Left lung (tissue), 14 donors: ENCODE measurements at regions of chr14 and their contacts with region 1.

Region 1: GRCh38 chr14:76918751-76919543 is 92.7 kb downstream of the LRRC74A start:
- DNase-seq: peak; percentile 91 to 96 (median 95)
- ATAC-seq: peak; percentile 88
- H3K4me3 ChIP-seq: no peak overlapping the region
- H3K27ac ChIP-seq: peak overlapping the region; percentile 90 to 93
- H3K4me1 ChIP-seq: peaks cover 37 to 75% of the 10 kb centered on the region in 2 donors
- H3K27me3 ChIP-seq: no peaks in the 10 kb centered on the region
- CTCF ChIP-seq: peak in 1 of 2 donors; percentile 13

Region 2: GRCh38 chr14:76956316-76957090 is 37.6 kb after region 1 on chr14:
- intact Hi-C with region 1: loop called in 1 of 2 experiments (anchors 5 kb)
- DNase-seq: peak; percentile 89 to 97 (median 94)
- ATAC-seq: peak; percentile 74
- H3K4me3 ChIP-seq: peak overlapping the region; percentile 15 to 36
- H3K27ac ChIP-seq: peak overlapping the region; percentile 95 to 99
- H3K4me1 ChIP-seq: peaks cover 39 to 87% of the 10 kb centered on the region in 2 donors
- H3K27me3 ChIP-seq: no peaks in the 10 kb centered on the region
- CTCF ChIP-seq: peak in 1 of 2 donors; percentile 51

Region 3: GRCh38 chr14:77040059-77040740 is 121.3 kb after region 1 on chr14:
- intact Hi-C with region 1: loop called in 1 of 2 experiments (anchors 10 kb)
- DNase-seq: peak; percentile 98 to 100 (median 100)
- ATAC-seq: peak; percentile 79
- H3K4me3 ChIP-seq: peak overlapping the region in 1 of 2 donors; percentile 20
- H3K27ac ChIP-seq: peak overlapping the region; percentile 95 to 100
- H3K4me1 ChIP-seq: peaks cover 76 to 98% of the 10 kb centered on the region in 2 donors
- H3K27me3 ChIP-seq: no peaks in the 10 kb centered on the region
- CTCF ChIP-seq: no peak

Region 4: GRCh38 chr14:77053046-77053841 is 134.3 kb after region 1 on chr14:
- intact Hi-C with region 1: loop called (anchors 5 to 10 kb)
- DNase-seq: peak in 3 of 4 donors; percentile 68 to 91 (median 84)
- ATAC-seq: peak; percentile 77
- H3K4me3 ChIP-seq: no peak overlapping the region
- H3K27ac ChIP-seq: peak overlapping the region in 1 of 2 donors; percentile 38
- H3K4me1 ChIP-seq: peaks cover 10 to 44% of the 10 kb centered on the region in 2 donors
- H3K27me3 ChIP-seq: no peaks in the 10 kb centered on the region
- CTCF ChIP-seq: peak; percentile 88 to 90

Region 5: GRCh38 chr14:77097700-77098528 is 179.0 kb after region 1 on chr14 and contains the start of gene CIPC:
- intact Hi-C with region 1: no loop called
- DNase-seq: peak; percentile 99 to 100 (median 100)
- ATAC-seq: peak; percentile 95
- H3K4me3 ChIP-seq: peak within 1 kb of the TSS; percentile 69 to 70
- H3K27ac ChIP-seq: peak within 1 kb of the TSS; percentile 97
- H3K4me1 ChIP-seq: peaks cover 10 to 45% of the 10 kb centered on the region in 2 donors
- H3K27me3 ChIP-seq: no peaks in the 10 kb centered on the region
- CTCF ChIP-seq: peak in 1 of 2 donors; percentile 8
- polyA plus RNA-seq, gene CIPC: 19.5 to 24.3 (median 22.2) TPM